ENCODE measurements at regions of chr16 and their contacts with region 1.

Region 1: DNA sequence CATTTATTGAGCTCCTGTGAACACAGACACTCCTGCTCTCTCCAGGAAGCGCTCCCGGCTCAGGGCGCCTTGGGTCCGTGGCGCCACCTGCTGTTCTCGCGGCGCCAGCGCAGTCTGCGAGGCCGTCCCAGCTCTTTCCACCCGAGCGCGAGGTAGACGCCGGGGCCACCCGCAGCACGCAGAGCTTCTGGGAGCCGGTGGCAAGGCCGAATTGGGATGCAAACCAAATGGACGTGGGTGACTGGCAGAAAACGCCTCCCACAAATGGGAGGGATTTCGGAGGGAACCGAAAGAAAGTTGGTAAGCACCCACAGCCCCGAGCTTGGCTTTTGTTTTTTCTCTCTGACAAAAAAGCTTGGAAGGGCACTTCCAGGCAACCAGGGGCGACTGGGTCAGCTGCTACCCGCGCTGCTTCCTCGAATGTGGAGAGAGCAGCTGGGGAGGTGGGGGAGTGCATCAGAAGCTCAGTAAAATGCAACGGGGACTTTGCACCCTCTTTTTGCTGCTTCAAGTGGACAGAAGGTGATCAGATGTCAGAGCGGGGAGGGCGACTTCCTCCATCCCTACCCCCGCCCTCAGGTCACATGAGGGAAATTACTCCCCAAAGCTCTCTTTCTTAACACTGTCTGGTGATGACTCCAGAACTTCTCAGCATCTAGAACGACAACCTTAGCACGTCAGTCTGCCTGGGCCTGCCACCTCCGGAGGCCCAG is 13.5 kb upstream of the N4BP1 start:
- DNase-seq: peak; percentile 53
- ATAC-seq: peak; percentile 99
- H3K4me3 ChIP-seq: peak overlapping the region; percentile 64
- H3K27ac ChIP-seq: no peak overlapping the region
- H3K4me1 ChIP-seq: peaks cover 11% of the 10 kb centered on the region
- H3K27me3 ChIP-seq: no peaks in the 10 kb centered on the region; a peak in 1 of 4 replicates
- CTCF ChIP-seq: peak; percentile 96 to 99 (median 98)
- EP300 ChIP-seq: no peak
- POLR2A ChIP-seq: no peak
- RAD21 ChIP-seq: peak; percentile 98

Region 2: DNA sequence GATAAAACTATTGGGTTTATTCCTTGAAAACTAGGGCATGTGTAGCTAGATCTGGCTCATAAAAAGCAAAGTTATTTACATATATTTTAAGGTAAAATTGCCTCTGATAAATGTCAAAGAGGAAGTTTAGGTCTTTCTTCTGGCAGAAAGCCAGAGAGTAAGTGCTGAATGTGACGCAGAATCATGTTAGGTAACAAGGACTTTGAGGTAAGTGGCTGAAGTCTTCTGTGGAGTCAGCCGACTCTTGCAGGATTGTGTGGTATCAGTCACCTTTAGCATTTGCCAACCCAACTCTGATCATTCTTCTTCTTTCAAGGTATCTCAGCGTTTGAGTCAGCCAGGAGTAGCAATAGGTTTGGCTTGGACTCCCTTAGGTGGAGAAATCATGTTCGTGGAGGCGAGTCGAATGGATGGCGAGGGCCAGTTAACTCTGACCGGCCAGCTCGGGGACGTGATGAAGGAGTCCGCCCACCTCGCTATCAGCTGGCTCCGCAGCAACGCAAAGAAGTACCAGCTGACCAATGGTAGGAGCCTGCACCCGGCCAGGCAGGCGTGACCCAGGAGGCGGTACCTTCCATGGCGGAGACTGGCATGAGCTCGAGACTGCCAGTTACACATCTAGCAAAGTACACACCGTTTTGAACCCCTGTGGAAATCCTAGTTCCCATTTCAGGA is 276.1 kb before region 1 on chr16:
- CTCF ChIA-PET with region 1: interaction called, 97 read pairs
- POLR2A ChIA-PET with region 1: interaction called, 3 read pairs
- RAD21 ChIA-PET with region 1: interaction called, 77 read pairs
- SMC1A ChIA-PET with region 1: interaction called, 60 read pairs
- in situ Hi-C with region 1: loop called (anchors 5 kb)
- intact Hi-C with region 1: no loop called
- DNase-seq: no peak
- ATAC-seq: no peak
- H3K4me3 ChIP-seq: no peak overlapping the region
- H3K27ac ChIP-seq: no peak overlapping the region
- H3K4me1 ChIP-seq: no peaks in the 10 kb centered on the region
- H3K27me3 ChIP-seq: no peaks in the 10 kb centered on the region
- CTCF ChIP-seq: no peak
- EP300 ChIP-seq: no peak
- POLR2A ChIP-seq: no peak
- RAD21 ChIP-seq: no peak

Region 3: DNA sequence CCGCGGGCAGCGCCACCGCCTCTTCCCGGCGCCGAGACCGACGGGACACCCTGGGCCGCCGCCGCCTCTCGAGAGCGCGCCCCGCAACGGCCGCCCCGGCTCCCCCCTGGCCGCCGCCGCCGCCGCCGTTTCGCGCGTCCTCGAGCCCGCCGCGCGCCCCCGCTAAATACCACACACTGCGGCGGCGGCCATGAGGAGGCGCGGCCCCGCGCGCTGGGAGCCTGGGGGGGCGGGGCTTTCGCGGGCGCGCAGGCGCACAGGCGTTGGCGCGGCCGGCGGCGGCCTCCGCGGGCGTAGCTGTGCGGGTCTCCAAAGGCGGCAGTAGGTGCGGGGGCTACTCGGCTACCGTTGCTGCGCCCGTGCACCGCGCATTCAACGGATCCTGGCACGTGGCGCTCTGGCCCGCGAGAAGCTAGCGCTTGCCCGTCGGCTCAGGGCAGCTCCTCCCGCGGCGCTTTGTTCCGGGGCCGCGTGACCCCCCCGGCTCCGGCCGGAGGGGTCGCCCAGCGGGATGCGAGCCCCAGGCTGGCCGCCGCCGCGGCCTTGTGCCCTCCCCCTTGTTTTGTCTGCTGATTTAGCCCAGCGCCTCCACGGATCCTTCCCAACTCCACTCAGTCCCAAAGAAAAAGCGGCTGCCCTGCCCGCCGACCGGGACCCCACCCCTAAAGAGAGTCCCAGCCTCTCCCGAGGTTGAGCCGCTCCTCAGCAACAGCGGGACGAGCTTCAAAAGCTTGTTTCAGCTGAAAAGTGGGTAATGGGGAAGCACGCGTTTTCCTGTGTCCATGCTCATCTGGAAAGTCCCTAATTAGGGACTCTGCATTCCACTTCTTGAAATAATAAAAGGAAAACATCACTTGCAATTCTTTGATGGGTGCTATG is 237.9 kb before region 1 on chr16 and contains the start of gene SIAH1:
- CTCF ChIA-PET with region 1: interaction called, 12 read pairs
- POLR2A ChIA-PET with region 1: no interaction called
- RAD21 ChIA-PET with region 1: interaction called, 5 read pairs
- SMC1A ChIA-PET with region 1: interaction called, 4 read pairs
- in situ Hi-C with region 1: no loop called
- intact Hi-C with region 1: no loop called
- DNase-seq: no peak
- ATAC-seq: peak; percentile 73
- H3K4me3 ChIP-seq: peak within 1 kb of the TSS; percentile 93
- H3K27ac ChIP-seq: peak within 1 kb of the TSS; percentile 83
- H3K4me1 ChIP-seq: no peaks in the 10 kb centered on the region; the same call in 1 of the 2 replicates
- H3K27me3 ChIP-seq: no peaks in the 10 kb centered on the region
- CTCF ChIP-seq: no peak
- EP300 ChIP-seq: no peak
- POLR2A ChIP-seq: peak; percentile 96
- RAD21 ChIP-seq: no peak
- polyA plus RNA-seq, gene SIAH1: 5.1 to 6.4 TPM

Region 4: GRCh38 chr16:48535831-48536613 is 87.4 kb before region 1 on chr16:
- CTCF ChIA-PET with region 1: interaction called, 43 read pairs
- POLR2A ChIA-PET with region 1: interaction called, 3 read pairs
- RAD21 ChIA-PET with region 1: interaction called, 27 read pairs
- SMC1A ChIA-PET with region 1: interaction called, 14 read pairs
- in situ Hi-C with region 1: no loop called
- intact Hi-C with region 1: loop called (anchors 1 kb)
- DNase-seq: peak; percentile 72
- ATAC-seq: peak; percentile 85
- H3K4me3 ChIP-seq: no peak overlapping the region
- H3K27ac ChIP-seq: peak overlapping the region; percentile 73
- H3K4me1 ChIP-seq: peaks cover 24% of the 10 kb centered on the region
- H3K27me3 ChIP-seq: no peaks in the 10 kb centered on the region
- CTCF ChIP-seq: no peak
- EP300 ChIP-seq: peak; percentile 71 to 76; a peak in 3 of 4 replicates
- POLR2A ChIP-seq: no peak; the same call in 1 of the 2 replicates
- RAD21 ChIP-seq: 0 out of 2 replicates have a peak, but pooled peaks have one; percentile 7

Region 5: GRCh38 chr16:48574763-48575162 is 48.7 kb before region 1 on chr16:
- CTCF ChIA-PET with region 1: interaction called, 12 read pairs
- POLR2A ChIA-PET with region 1: interaction called, 6 read pairs
- RAD21 ChIA-PET with region 1: interaction called, 5 read pairs
- SMC1A ChIA-PET with region 1: interaction called, 6 read pairs
- in situ Hi-C with region 1: no loop called
- intact Hi-C with region 1: no loop called
- DNase-seq: no peak
- ATAC-seq: no peak
- H3K4me3 ChIP-seq: no peak overlapping the region
- H3K27ac ChIP-seq: no peak overlapping the region
- H3K4me1 ChIP-seq: peaks cover 1% of the 10 kb centered on the region; the same call in 1 of the 2 replicates
- H3K27me3 ChIP-seq: no peaks in the 10 kb centered on the region
- CTCF ChIP-seq: no peak
- EP300 ChIP-seq: no peak
- POLR2A ChIP-seq: no peak
- RAD21 ChIP-seq: no peak

Region 6: GRCh38 chr16:48609652-48610029 is 13.8 kb before region 1 on chr16:
- CTCF ChIA-PET with region 1: interaction called, 60 read pairs
- POLR2A ChIA-PET with region 1: interaction called, 4 read pairs
- RAD21 ChIA-PET with region 1: interaction called, 25 read pairs
- SMC1A ChIA-PET with region 1: interaction called, 17 read pairs
- in situ Hi-C with region 1: no loop called
- intact Hi-C with region 1: no loop called
- DNase-seq: no peak
- ATAC-seq: peak; percentile 46
- H3K4me3 ChIP-seq: peak overlapping the region; percentile 90
- H3K27ac ChIP-seq: peak overlapping the region; percentile 97
- H3K4me1 ChIP-seq: peaks cover 46% of the 10 kb centered on the region
- H3K27me3 ChIP-seq: no peaks in the 10 kb centered on the region
- CTCF ChIP-seq: no peak
- EP300 ChIP-seq: no peak
- POLR2A ChIP-seq: peak; percentile 75
- RAD21 ChIP-seq: no peak

Region 7: DNA sequence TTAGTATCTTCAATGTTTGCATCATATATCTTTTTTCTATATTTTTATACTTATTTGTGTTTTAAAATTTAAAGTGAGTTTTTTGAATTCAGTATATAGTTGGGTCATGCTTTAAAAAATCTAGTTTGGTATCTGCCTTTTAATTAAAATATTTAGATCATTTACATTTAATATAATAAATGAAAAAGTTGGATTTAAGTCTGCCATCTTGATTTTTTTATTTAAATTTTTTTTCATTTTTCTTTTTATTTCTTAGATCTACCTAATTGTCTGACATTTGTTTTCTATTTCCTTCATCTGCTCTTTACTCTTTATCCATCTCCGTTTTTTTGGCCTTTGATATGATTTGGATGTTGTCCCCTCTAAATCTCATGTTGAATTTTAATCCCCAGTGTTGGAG is 36.5 kb after region 1 on chr16:
- CTCF ChIA-PET with region 1: no interaction called
- POLR2A ChIA-PET with region 1: no interaction called
- RAD21 ChIA-PET with region 1: no interaction called
- SMC1A ChIA-PET with region 1: no interaction called
- in situ Hi-C with region 1: no loop called
- intact Hi-C with region 1: no loop called
- DNase-seq: no peak
- ATAC-seq: no peak
- H3K4me3 ChIP-seq: no peak overlapping the region
- H3K27ac ChIP-seq: no peak overlapping the region
- H3K4me1 ChIP-seq: no peaks in the 10 kb centered on the region
- H3K27me3 ChIP-seq: no peaks in the 10 kb centered on the region
- CTCF ChIP-seq: no peak
- EP300 ChIP-seq: no peak
- POLR2A ChIP-seq: no peak
- RAD21 ChIP-seq: no peak

Measured in GM12878 (cell line).